ENCODE measurements at regions of chr6 and their contacts with region 1.

Region 1: GRCh38 chr6:26553635-26554446 is 15.7 kb downstream of the HMGN4 start:
- DNase-seq: no peak
- ATAC-seq: peak; percentile 59
- H3K4me3 ChIP-seq: peak overlapping the region; percentile 80
- H3K27ac ChIP-seq: peak overlapping the region; percentile 69
- H3K4me1 ChIP-seq: 0 out of 2 replicates have a peak, but pooled peaks cover 3% of the 10 kb centered on the region
- H3K27me3 ChIP-seq: no peaks in the 10 kb centered on the region
- CTCF ChIP-seq: no peak
- EP300 ChIP-seq: no peak; a peak in 1 of 4 replicates
- POLR2A ChIP-seq: no peak
- RAD21 ChIP-seq: no peak

Region 2: GRCh38 chr6:26312501-26313390 is 241.1 kb before region 1 on chr6:
- CTCF ChIA-PET with region 1: interaction called, 3 read pairs
- POLR2A ChIA-PET with region 1: interaction called, 3 read pairs
- RAD21 ChIA-PET with region 1: interaction called, 4 read pairs
- SMC1A ChIA-PET with region 1: interaction called, 6 read pairs
- in situ Hi-C with region 1: no loop called
- intact Hi-C with region 1: loop called (anchors 2 kb)
- DNase-seq: no peak
- ATAC-seq: peak; percentile 72
- H3K4me3 ChIP-seq: peak overlapping the region; percentile 80
- H3K27ac ChIP-seq: peak overlapping the region; percentile 66
- H3K4me1 ChIP-seq: peaks cover 14% of the 10 kb centered on the region
- H3K27me3 ChIP-seq: no peaks in the 10 kb centered on the region
- CTCF ChIP-seq: no peak
- EP300 ChIP-seq: peak in 1 of 2 experiments; percentile 61; a peak in 1 of 4 replicates
- POLR2A ChIP-seq: no peak
- RAD21 ChIP-seq: no peak

Region 3: DNA sequence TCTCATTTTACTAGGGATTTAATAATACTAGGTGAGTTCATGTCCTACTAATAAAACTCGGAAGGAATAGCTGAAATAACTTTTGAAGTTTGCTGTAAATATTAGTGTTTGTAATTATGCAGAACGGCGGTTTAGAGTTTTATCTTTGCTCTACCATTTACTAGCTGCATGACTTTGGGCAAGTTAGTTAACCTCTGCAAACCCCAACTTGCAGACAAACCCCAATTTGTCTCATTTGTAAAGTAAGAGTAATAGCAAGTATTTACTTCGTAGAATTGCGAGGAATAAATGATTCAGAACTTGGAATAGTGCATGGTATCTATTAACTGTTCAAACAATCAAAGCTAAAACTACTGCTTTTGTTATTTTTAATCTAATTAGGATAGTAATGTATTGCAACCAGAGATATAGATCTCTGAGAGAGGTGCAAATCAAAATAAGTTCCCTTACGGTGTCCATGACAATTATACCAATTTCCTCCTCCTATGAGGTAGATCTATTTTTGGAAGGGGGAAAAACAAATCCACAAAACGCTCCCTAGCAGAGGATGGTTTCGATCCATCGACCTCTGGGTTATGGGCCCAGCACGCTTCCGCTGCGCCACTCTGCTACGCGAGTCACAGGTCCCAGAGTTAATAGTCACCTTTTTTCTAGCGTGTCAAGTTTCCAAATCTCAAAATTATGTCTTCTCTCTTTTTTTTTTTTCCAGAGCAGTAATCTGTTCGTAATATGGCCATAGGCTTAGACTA is 223.9 kb before region 1 on chr6:
- CTCF ChIA-PET with region 1: interaction called, 5 read pairs
- POLR2A ChIA-PET with region 1: interaction called, 8 read pairs
- RAD21 ChIA-PET with region 1: interaction called, 4 read pairs
- SMC1A ChIA-PET with region 1: interaction called, 6 read pairs
- in situ Hi-C with region 1: loop called (anchors 5 kb)
- intact Hi-C with region 1: loop called (anchors 1 kb)
- DNase-seq: no peak
- ATAC-seq: peak; percentile 54
- H3K4me3 ChIP-seq: peak overlapping the region; percentile 83
- H3K27ac ChIP-seq: no peak overlapping the region
- H3K4me1 ChIP-seq: no peaks in the 10 kb centered on the region
- H3K27me3 ChIP-seq: no peaks in the 10 kb centered on the region
- CTCF ChIP-seq: no peak
- EP300 ChIP-seq: peak in 1 of 2 experiments; percentile 57; a peak in 1 of 4 replicates
- POLR2A ChIP-seq: no peak
- RAD21 ChIP-seq: no peak

Region 4: GRCh38 chr6:26473758-26474438 is 79.9 kb before region 1 on chr6:
- CTCF ChIA-PET with region 1: no interaction called
- POLR2A ChIA-PET with region 1: interaction called, 11 read pairs
- RAD21 ChIA-PET with region 1: interaction called, 4 read pairs
- SMC1A ChIA-PET with region 1: interaction called, 3 read pairs
- in situ Hi-C with region 1: no loop called
- intact Hi-C with region 1: no loop called
- DNase-seq: peak; percentile 97
- ATAC-seq: peak; percentile 95
- H3K4me3 ChIP-seq: peak overlapping the region; percentile 77
- H3K27ac ChIP-seq: peak overlapping the region; percentile 100
- H3K4me1 ChIP-seq: peaks cover 29% of the 10 kb centered on the region
- H3K27me3 ChIP-seq: no peaks in the 10 kb centered on the region
- CTCF ChIP-seq: no peak
- EP300 ChIP-seq: no peak; a peak in 1 of 4 replicates
- POLR2A ChIP-seq: peak; percentile 87
- RAD21 ChIP-seq: no peak

Region 5: GRCh38 chr6:26532699-26533531 is 20.9 kb before region 1 on chr6:
- CTCF ChIA-PET with region 1: interaction called, 17 read pairs
- POLR2A ChIA-PET with region 1: interaction called, 29 read pairs
- RAD21 ChIA-PET with region 1: interaction called, 18 read pairs
- SMC1A ChIA-PET with region 1: interaction called, 28 read pairs
- in situ Hi-C with region 1: no loop called
- intact Hi-C with region 1: loop called (anchors 1 kb)
- DNase-seq: peak; percentile 99
- ATAC-seq: peak; percentile 59
- H3K4me3 ChIP-seq: peak overlapping the region; percentile 79
- H3K27ac ChIP-seq: peak overlapping the region; percentile 73
- H3K4me1 ChIP-seq: peaks cover 17% of the 10 kb centered on the region
- H3K27me3 ChIP-seq: no peaks in the 10 kb centered on the region
- CTCF ChIP-seq: no peak
- EP300 ChIP-seq: peak in 1 of 2 experiments; percentile 55; a peak in 1 of 4 replicates
- POLR2A ChIP-seq: no peak
- RAD21 ChIP-seq: no peak

Region 6: DNA sequence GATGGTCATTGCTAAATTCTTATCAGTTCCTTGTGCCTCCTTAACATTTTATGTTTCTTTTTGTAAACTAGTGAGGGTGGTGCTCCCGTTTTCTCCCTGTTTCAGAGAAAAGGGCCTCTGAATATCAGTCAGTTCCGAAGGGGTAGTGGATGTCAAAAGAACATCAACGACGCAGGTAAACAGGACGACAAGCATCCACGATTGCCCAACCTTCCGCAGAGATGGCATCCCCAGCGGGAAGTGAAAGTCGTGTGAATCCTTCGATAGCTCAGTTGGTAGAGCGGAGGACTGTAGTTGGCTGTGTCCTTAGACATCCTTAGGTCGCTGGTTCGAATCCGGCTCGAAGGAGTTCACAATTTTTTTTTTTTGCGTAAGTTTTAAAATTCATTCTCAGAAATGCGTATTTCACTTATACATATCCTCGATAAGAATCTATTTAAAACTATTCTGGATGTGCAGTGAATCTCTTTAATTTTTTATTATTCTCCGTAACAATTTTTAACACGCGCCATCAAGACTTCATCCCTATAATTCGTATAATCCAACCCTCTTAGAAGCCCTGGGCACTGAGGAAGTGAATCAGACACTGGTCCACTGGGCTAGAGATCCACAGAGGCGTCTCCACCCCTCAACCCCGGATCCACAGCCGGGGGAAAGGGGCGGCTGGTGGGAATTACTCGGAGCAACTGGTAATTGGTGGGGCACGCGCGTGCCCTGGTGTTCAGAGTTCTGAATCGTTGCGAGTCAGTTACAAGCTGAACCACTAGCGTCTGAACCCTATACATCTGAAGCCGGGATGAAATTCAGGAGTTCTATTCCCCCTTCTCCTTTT is 15.0 kb after region 1 on chr6:
- CTCF ChIA-PET with region 1: interaction called, 28 read pairs
- POLR2A ChIA-PET with region 1: interaction called, 11 read pairs
- RAD21 ChIA-PET with region 1: interaction called, 40 read pairs
- SMC1A ChIA-PET with region 1: interaction called, 44 read pairs
- in situ Hi-C with region 1: no loop called
- intact Hi-C with region 1: loop called (anchors 1 kb)
- DNase-seq: peak; percentile 100
- ATAC-seq: peak; percentile 76
- H3K4me3 ChIP-seq: peak overlapping the region; percentile 81
- H3K27ac ChIP-seq: no peak overlapping the region
- H3K4me1 ChIP-seq: peaks cover 13% of the 10 kb centered on the region
- H3K27me3 ChIP-seq: no peaks in the 10 kb centered on the region
- CTCF ChIP-seq: peak; percentile 52 to 79 (median 52); a peak in 5 of 6 replicates
- EP300 ChIP-seq: peak in 1 of 2 experiments; percentile 48; a peak in 1 of 4 replicates
- POLR2A ChIP-seq: no peak
- RAD21 ChIP-seq: peak; percentile 55